ENCODE measurements at regions of chr5 and their contacts with region 1.

Region 1: DNA sequence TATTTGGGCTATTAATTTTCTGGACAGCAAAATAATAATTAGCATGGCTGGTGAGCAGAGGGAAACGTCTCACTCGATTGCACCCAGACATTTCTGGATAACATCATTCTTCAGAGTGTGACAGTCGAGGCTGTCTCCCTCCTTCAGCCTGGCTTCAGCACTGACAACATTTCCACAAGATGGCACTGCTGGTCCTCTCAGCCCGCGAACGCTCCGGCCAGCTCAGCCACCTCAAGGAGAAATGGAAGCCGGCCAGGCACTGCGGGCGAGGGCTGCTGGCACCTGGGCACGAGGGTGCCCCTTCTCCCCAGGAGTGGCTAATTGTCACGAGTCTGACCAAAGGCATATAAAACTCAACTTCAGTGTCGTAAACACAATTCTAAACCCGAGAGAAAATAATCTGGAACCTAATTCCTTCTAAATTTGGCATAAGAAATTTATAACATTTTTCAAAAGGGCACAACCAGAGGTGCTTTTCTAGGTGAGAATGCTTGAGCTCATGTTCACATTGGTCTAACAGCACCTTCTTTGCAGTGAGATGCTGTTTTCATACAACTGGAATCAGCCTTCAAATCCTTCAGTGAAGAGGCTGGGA is 65.9 kb downstream of the DAP start:
- DNase-seq: peak; percentile 75 to 84 (median 77)
- ATAC-seq: peak; percentile 81 to 92 (median 89)
- H3K4me3 ChIP-seq: no peak overlapping the region
- H3K27ac ChIP-seq: no peak overlapping the region
- H3K4me1 ChIP-seq: peaks cover 0 to 13% (median 9%) of the 10 kb centered on the region in 12 donors
- H3K27me3 ChIP-seq: no peaks in the 10 kb centered on the region
- CTCF ChIP-seq: peak; percentile 62 to 88 (median 76)
- POLR2A ChIP-seq: no peak

Region 2: DNA sequence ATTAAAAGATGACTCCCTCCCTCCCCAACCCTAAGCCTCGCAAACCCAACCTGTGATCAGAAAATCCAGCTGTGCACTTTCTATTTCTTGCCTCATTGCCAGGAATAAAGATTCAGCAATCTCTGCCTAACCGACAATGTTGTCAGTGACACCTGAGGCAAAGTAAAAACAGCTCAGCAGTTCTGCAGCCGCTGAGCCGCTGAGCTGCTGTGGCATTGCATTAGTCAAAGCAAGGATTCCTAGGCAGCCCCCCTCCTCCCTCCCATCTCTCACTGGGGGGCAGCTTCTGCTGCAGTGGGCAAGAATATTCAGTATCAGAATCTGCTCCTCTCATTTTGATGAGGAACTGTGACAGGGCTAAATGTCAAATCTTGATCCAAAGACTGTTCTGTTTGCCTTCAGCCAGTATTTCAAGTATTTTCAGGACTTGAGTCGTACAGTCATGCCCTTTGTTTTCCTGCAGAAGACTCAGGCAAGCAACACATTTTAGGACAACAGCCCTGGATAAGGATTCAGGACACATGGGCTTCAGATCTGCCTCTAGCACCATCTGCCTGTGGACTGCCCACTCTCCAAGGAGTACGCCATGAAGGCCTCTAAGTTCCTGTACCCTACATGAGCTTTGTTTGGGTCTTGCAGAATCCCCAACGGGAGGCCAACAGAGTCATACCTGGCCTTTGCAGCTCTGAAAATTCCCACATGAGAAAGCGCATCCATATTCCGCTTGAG is 106.9 kb after region 1 on chr5:
- intact Hi-C with region 1: loop called in 1 of 10 experiments (anchors 5 kb)
- DNase-seq: no peak
- ATAC-seq: peak in 2 of 4 donors; percentile 53 to 67
- H3K4me3 ChIP-seq: no peak overlapping the region
- H3K27ac ChIP-seq: no peak overlapping the region
- H3K4me1 ChIP-seq: no peaks in the 10 kb centered on the region
- H3K27me3 ChIP-seq: peaks cover 0 to 4% (median 0%) of the 10 kb centered on the region in 9 donors
- CTCF ChIP-seq: peak in 8 of 12 donors; percentile 8 to 41 (median 24)
- POLR2A ChIP-seq: no peak

Region 3: GRCh38 chr5:10987930-10988504 is 292.9 kb after region 1 on chr5:
- intact Hi-C with region 1: loop called in 5 of 10 experiments (anchors 5 to 10 kb)
- DNase-seq: peak; percentile 69 to 85 (median 79)
- ATAC-seq: peak; percentile 86 to 89 (median 88)
- H3K4me3 ChIP-seq: no peak overlapping the region
- H3K27ac ChIP-seq: peak overlapping the region in 5 of 12 donors; percentile 10 to 84 (median 75)
- H3K4me1 ChIP-seq: peaks cover 0 to 24% (median 4%) of the 10 kb centered on the region in 12 donors
- H3K27me3 ChIP-seq: peaks cover 0 to 11% (median 0%) of the 10 kb centered on the region in 9 donors
- CTCF ChIP-seq: peak; percentile 48 to 78 (median 70)
- POLR2A ChIP-seq: no peak

Region 4: GRCh38 chr5:11182441-11183268 is 487.5 kb after region 1 on chr5:
- intact Hi-C with region 1: loop called in 6 of 10 experiments (anchors 2 to 10 kb)
- DNase-seq: no peak
- ATAC-seq: peak in 1 of 4 donors; percentile 34
- H3K4me3 ChIP-seq: no peak overlapping the region
- H3K27ac ChIP-seq: no peak overlapping the region
- H3K4me1 ChIP-seq: peaks cover 0 to 9% (median 0%) of the 10 kb centered on the region in 12 donors
- H3K27me3 ChIP-seq: no peaks in the 10 kb centered on the region
- CTCF ChIP-seq: peak in 10 of 12 donors; percentile 24 to 63 (median 40)
- POLR2A ChIP-seq: no peak

Region 5: DNA sequence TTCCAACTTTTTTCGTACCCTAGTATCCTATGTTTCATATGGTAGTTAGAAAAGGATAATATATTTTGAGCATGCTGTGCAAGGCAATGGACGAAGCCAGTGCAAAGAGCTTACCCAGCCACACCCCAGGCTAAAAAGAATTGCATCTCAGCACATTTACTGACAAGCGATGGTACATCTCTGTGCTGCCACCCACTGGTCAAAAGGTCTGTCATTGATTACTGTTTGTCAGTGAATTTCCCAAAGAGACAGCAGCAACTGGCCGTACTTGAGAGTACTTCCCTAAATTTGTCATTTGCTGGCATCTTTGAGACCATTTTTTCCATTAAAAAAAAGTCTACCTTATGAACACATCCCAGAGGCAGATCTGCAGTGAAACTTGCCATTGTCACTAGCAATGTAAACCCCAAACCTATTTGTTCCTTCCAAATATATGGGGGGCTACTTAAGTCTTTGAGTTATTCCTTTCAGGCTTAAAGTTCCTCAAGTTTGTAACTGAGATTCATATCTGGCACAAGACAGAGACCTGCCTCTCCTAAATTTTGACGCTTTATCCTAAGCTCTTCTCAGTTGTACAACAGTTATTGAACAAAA is 1024.8 kb after region 1 on chr5:
- intact Hi-C with region 1: loop called in 1 of 10 experiments (anchors 10 kb)
- DNase-seq: peak in 4 of 5 donors; percentile 15 to 62 (median 42)
- ATAC-seq: peak in 2 of 4 donors; percentile 68 to 80
- H3K4me3 ChIP-seq: no peak overlapping the region
- H3K27ac ChIP-seq: no peak overlapping the region
- H3K4me1 ChIP-seq: no peaks in the 10 kb centered on the region
- H3K27me3 ChIP-seq: no peaks in the 10 kb centered on the region
- CTCF ChIP-seq: peak in 11 of 12 donors; percentile 14 to 51 (median 38)
- POLR2A ChIP-seq: no peak